Activated CD4-positive, alpha-beta T cell treated with anti-CD3 and anti-CD28 coated beads, Interleukin-2, amount 10 ng/mL, durations not matched to agents 7 days and 5 days (primary cell): ENCODE measurements at regions of chr19 and their contacts with region 1.

Region 1: GRCh38 chr19:47210689-47211316 is 20.2 kb downstream of the BBC3 start:
- DNase-seq: peak; percentile 88
- H3K4me3 Mint-ChIP-seq: no peak overlapping the region
- H3K27ac Mint-ChIP-seq: peak overlapping the region; percentile 87
- H3K4me1 Mint-ChIP-seq: peaks cover 20% of the 10 kb centered on the region
- H3K27me3 Mint-ChIP-seq: no peaks in the 10 kb centered on the region

Region 2: GRCh38 chr19:47157431-47158321 is 53.1 kb before region 1 on chr19:
- CTCF ChIA-PET with region 1: interaction called, 11 read pairs
- POLR2A ChIA-PET with region 1: no interaction called
- DNase-seq: peak; percentile 60
- H3K4me3 Mint-ChIP-seq: peak overlapping the region; percentile 55
- H3K27ac Mint-ChIP-seq: peak overlapping the region; percentile 85
- H3K4me1 Mint-ChIP-seq: peaks cover 62% of the 10 kb centered on the region
- H3K27me3 Mint-ChIP-seq: no peaks in the 10 kb centered on the region

Region 3: GRCh38 chr19:47176627-47177090 is 34.1 kb before region 1 on chr19:
- CTCF ChIA-PET with region 1: interaction called, 10 read pairs
- POLR2A ChIA-PET with region 1: no interaction called
- DNase-seq: peak; percentile 59
- H3K4me3 Mint-ChIP-seq: peak overlapping the region; percentile 44
- H3K27ac Mint-ChIP-seq: peak overlapping the region; percentile 88
- H3K4me1 Mint-ChIP-seq: peaks cover 58% of the 10 kb centered on the region
- H3K27me3 Mint-ChIP-seq: no peaks in the 10 kb centered on the region

Region 4: DNA sequence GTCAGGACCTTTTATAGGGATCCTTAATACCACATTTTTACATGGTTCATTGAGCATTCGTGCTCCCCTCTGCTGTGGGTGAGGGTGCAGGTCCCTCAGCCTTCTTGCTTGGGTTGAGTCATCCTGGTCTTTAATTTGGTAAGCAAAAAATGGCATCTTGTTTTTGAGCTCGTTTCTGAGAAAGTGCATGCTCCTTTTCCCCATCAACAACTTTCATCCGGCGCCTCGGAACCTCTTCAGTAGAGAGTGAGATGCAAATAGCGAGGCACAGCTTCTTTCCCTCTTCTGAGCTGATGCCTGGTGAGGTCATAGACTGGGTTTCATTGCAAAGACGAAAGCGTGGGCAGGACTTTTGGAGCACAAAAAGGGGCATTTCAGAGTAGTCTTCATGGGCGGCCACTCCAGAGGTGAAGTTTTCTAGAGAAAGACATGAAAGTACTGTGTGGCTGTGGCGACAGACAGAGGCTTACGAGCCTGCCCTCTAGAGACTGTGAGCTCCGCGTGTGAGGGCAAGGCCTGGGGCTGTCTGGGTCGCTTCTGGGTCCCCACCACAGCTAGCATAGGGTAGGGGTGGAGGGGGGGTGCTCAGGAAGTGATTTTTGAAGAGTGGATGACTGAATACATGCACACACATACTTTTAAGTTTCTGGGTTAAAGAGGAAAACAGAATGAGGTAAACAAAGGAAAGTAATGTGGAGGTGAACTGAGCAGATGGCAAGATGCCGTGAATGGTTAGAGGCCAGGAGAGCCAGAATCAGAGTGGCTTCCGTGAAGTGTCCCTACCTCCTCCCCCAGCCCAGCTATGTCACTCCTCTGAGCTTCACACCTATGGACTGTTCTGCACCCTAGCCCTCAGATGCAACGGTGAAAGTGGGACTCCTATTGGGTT is 24.1 kb before region 1 on chr19:
- CTCF ChIA-PET with region 1: interaction called, 21 read pairs
- POLR2A ChIA-PET with region 1: interaction called, 9 read pairs
- DNase-seq: peak; percentile 78
- H3K4me3 Mint-ChIP-seq: peak overlapping the region; percentile 44
- H3K27ac Mint-ChIP-seq: peak overlapping the region; percentile 93
- H3K4me1 Mint-ChIP-seq: peaks cover 87% of the 10 kb centered on the region
- H3K27me3 Mint-ChIP-seq: no peaks in the 10 kb centered on the region

Region 5: DNA sequence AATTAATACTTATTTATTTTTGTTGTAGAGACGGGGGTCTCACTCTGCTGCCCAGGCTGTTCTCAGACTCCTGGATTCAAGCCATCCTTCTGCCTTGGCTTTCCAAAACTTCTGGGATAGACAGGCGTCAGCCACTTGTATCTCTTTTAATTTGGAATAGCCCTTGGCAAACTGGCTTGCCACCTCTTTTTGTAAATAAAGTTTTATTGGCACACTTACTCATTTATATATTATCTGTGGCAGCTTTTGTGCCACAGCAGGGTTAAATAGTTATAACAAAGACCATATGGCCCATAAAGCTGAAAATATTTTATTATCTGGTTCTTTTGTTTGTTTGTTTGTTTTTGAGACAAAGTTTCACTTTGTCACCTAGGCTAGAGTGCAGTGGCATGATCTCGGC is 10.3 kb before region 1 on chr19:
- CTCF ChIA-PET with region 1: interaction called, 18 read pairs
- POLR2A ChIA-PET with region 1: no interaction called
- DNase-seq: no peak
- H3K4me3 Mint-ChIP-seq: no peak overlapping the region
- H3K27ac Mint-ChIP-seq: no peak overlapping the region
- H3K4me1 Mint-ChIP-seq: peaks cover 11% of the 10 kb centered on the region
- H3K27me3 Mint-ChIP-seq: no peaks in the 10 kb centered on the region

Region 6: GRCh38 chr19:47225746-47226425 is 15.1 kb after region 1 on chr19:
- CTCF ChIA-PET with region 1: interaction called, 59 read pairs
- POLR2A ChIA-PET with region 1: interaction called, 5 read pairs
- DNase-seq: peak; percentile 84
- H3K4me3 Mint-ChIP-seq: peak overlapping the region; percentile 76
- H3K27ac Mint-ChIP-seq: peak overlapping the region; percentile 82
- H3K4me1 Mint-ChIP-seq: peaks cover 17% of the 10 kb centered on the region
- H3K27me3 Mint-ChIP-seq: no peaks in the 10 kb centered on the region

Region 7: GRCh38 chr19:47256688-47257443 is 46.1 kb after region 1 on chr19:
- CTCF ChIA-PET with region 1: interaction called, 10 read pairs
- POLR2A ChIA-PET with region 1: no interaction called
- DNase-seq: peak; percentile 100
- H3K4me3 Mint-ChIP-seq: peak overlapping the region; percentile 91
- H3K27ac Mint-ChIP-seq: peak overlapping the region; percentile 97
- H3K4me1 Mint-ChIP-seq: peaks cover 37% of the 10 kb centered on the region
- H3K27me3 Mint-ChIP-seq: no peaks in the 10 kb centered on the region